ENCODE measurements at regions of chr6 and their contacts with region 1.

Region 1: DNA sequence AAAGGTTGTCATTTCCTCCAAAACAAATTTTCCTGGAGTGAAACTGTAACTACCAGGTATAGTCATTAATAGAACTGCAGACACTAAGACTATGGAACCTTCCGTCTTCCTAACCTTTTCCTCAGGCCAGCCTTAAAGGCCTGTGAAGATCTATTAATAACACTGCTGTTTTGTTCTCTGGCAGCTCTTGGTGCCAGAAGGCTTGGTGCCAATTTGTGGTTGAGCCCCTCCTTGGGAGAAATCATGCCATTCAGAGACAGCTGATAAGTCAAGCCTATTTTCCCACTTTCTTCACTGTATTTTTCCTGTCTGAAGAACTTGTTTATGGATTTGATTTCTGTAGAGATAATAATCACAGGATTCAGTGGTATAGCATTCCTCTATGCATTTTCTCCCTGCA is 64.8 kb downstream of the HCRTR2 start:
- DNase-seq: no peak
- ATAC-seq: peak; percentile 59 to 65

Region 2: DNA sequence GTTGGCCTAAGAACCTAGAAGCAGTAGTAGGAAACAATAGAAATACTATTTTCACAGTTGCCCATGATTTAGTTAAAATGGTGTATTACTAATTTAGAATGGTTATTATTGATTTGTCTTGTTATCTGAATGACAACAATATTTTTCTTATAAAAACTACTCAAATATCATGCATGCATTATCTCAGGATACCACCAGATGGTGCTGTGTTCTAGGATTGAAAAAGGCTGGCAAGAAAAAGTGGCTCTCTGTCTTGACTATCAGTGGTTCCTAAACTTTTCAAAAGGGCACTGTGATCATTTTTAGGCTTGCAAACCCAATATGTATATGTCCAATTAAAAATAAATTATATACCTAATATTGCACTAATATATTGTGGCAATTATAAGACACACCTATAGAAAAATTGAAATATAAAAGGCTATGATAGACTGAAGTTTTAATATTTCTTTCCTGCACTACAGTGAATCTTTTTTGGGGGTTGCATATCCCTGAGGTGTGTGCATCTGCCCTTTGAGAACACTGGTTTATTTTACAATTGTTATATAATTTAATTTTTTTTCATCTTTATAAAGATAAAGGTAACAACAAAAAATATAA is 1259.5 kb before region 1 on chr6:
- intact Hi-C with region 1: loop called in 1 of 2 experiments (anchors 5 kb)
- DNase-seq: no peak
- ATAC-seq: no peak

Region 3: GRCh38 chr6:54515013-54515412 is 724.1 kb before region 1 on chr6:
- intact Hi-C with region 1: loop called (anchors 10 kb)
- DNase-seq: no peak
- ATAC-seq: no peak

Region 4: DNA sequence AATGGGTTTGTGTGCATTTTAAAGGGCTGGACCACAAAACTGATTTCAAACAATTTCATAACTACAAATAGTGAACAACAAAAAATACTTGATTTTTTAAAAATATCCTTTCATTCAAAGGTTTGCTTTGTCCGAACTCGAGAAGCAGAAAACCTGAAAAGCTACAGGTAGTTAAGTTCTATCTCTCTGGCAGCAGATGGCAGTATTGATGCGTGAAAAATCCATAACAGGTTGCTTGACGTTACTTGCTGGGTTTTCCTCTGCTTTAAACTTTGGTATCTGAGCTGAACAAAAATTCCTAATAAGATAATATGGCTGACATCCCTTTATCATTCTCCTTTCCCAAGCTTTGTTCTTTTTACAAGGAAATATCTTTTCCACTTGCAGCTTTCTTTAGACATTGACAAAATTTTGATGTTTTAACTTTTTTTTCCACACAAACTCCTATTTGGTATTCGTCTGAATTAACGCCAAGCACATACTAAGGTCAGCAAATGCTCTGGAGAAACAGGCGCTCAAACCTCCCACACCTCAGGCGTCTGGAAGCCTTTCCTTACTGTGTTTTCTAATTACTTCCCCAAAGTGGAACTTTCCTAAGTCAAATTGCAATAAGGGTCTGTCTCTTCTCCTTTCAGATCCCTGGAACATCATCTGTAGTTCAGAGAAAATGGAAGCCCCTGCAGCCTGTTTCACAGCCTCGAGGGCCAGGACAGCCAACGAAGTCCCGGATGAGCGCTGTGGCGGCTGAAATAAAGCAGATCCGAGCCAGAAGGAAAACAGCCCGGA is 37.8 kb after region 1 on chr6:
- intact Hi-C with region 1: no loop called
- DNase-seq: peak; percentile 33
- ATAC-seq: peak; percentile 78 to 91

Measured in left cardiac atrium (tissue), 4 donors.